ENCODE measurements at regions of chr2 and their contacts with region 1.

Region 1: GRCh38 chr2:105652014-105652796 is 92.5 kb upstream of the NCK2 start:
- DNase-seq: no peak
- H3K4me3 Mint-ChIP-seq: no peak overlapping the region
- H3K27ac Mint-ChIP-seq: no peak overlapping the region
- H3K4me1 Mint-ChIP-seq: peaks cover 13% of the 10 kb centered on the region
- H3K27me3 Mint-ChIP-seq: no peaks in the 10 kb centered on the region

Region 2: GRCh38 chr2:105674859-105675541 is 22.8 kb after region 1 on chr2:
- CTCF ChIA-PET with region 1: no interaction called
- intact Hi-C with region 1: loop called (anchors 1 kb)
- DNase-seq: peak; percentile 79
- H3K4me3 Mint-ChIP-seq: no peak overlapping the region
- H3K27ac Mint-ChIP-seq: peak overlapping the region; percentile 86
- H3K4me1 Mint-ChIP-seq: peaks cover 19% of the 10 kb centered on the region
- H3K27me3 Mint-ChIP-seq: no peaks in the 10 kb centered on the region

Measured in activated naive CD4-positive, alpha-beta T cell treated with anti-CD3 and anti-CD28 coated beads for 36 hours (primary cell).